ENCODE measurements at regions of chr20 and their contacts with region 1.

Region 1: DNA sequence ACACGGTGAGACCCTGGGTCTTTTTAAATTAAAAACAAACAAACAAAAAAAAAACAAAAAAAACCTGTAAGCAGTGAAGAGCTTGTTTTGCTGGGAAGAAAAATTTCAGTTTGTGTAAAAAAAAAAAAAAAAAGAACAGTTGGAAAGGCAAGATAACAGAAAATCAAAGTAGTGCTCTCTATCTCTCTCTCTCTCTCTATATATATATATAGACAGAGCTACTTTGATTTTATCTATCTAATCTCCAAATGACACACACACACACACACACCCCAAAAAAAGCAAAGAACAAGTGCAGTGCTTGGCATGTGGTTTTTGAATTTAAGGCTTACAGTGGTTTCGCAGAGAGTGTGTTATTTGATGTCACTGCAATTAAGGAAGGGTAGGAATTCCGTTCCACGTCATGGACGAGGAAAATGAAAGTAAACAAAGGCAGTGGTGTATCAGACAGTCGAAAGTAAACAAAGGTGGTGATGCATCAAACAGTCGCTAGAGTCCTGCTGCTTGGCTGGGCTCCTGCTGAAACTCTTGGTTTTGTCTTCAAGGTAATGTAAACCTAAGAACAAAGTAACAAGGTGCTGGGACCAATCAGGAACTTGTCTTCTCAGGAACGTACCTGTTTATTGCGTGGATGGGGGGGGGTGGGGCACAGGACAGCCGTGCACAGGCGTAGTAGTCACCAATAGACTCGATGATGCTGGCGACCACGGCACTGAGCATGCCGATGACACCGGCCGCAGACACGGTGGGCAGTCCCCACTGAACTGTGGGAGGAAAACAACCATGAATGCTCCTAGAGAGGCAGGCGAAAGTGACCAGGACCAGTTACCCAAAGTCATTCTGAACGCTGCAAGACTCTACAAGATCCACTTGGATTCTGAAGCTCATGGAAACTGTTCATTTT is 131.8 kb downstream of the SLC23A2 start:
- DNase-seq: peak in 3 of 7 donors; percentile 21 to 57 (median 26)
- H3K4me3 ChIP-seq: no peak overlapping the region
- H3K27ac ChIP-seq: peak overlapping the region in 2 of 5 donors; percentile 13 to 42
- H3K4me1 ChIP-seq: no peaks in the 10 kb centered on the region
- H3K27me3 ChIP-seq: no peaks in the 10 kb centered on the region
- CTCF ChIP-seq: no peak
- POLR2A ChIP-seq: no peak

Region 2: GRCh38 chr20:4937397-4938319 is 68.1 kb after region 1 on chr20:
- intact Hi-C with region 1: loop called in 1 of 2 experiments (anchors 10 kb)
- DNase-seq: peak in 2 of 7 donors; percentile 10 to 36
- H3K4me3 ChIP-seq: peak overlapping the region in 1 of 4 donors; percentile 13
- H3K27ac ChIP-seq: peak overlapping the region; percentile 47 to 91 (median 82)
- H3K4me1 ChIP-seq: peaks cover 15 to 50% of the 10 kb centered on the region in 2 donors
- H3K27me3 ChIP-seq: no peaks in the 10 kb centered on the region
- CTCF ChIP-seq: no peak
- POLR2A ChIP-seq: no peak